Endothelial cell of umbilical vein (primary cell): ENCODE measurements at regions of chr1 and their contacts with region 1.

Region 1: DNA sequence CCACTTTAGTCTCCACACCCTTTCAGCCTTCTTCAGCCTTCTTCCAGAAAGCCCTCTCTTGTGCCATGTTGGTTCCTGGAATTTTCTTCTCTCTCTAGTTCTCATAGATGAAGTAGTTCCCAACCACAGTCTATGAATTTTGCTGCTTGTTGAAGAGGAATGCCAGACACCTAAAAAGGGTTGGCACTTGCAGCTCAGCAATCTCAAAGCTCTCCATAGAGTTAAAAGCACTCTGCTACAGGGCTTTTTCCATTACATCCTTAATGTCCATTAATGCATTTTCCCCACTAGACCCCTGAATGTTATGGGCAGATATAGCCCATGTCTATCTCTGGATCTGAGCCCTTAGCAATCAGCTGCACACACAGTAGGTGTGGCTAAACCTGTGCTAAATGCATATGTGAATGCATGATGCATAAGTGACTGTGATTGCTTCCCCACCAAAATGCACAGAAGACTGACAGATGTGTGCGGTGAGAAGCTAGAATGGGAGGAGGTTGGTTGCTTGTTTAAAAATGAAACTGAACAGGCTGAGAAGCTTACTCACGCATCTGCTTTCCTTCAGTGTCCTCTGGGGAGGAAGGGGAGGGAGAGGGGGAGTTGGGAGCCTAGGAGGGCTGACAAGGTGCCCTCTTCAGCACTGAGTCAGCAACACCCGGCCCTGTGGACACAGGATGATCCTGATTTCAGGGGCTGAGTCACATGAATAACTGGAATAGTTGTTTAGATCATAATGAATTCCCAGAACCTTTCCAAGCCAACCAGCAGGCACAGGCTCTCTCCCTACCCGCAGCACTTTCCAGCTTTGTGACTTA is 146.1 kb upstream of the FGGY start:
- DNase-seq: peak; percentile 89
- H3K4me3 ChIP-seq: no peak overlapping the region
- H3K27ac ChIP-seq: peak overlapping the region; percentile 60
- H3K4me1 ChIP-seq: peaks cover 33% of the 10 kb centered on the region
- H3K27me3 ChIP-seq: no peaks in the 10 kb centered on the region
- CTCF ChIP-seq: no peak
- POLR2A ChIP-seq: no peak

Region 2: GRCh38 chr1:59229138-59229537 is 78.4 kb after region 1 on chr1:
- CTCF ChIA-PET with region 1: no interaction called
- POLR2A ChIA-PET with region 1: no interaction called
- dilution Hi-C with region 1: no loop called
- intact Hi-C with region 1: no loop called
- DNase-seq: no peak
- H3K4me3 ChIP-seq: no peak overlapping the region
- H3K27ac ChIP-seq: no peak overlapping the region
- H3K4me1 ChIP-seq: no peaks in the 10 kb centered on the region
- H3K27me3 ChIP-seq: no peaks in the 10 kb centered on the region
- CTCF ChIP-seq: no peak
- POLR2A ChIP-seq: no peak

Region 3: DNA sequence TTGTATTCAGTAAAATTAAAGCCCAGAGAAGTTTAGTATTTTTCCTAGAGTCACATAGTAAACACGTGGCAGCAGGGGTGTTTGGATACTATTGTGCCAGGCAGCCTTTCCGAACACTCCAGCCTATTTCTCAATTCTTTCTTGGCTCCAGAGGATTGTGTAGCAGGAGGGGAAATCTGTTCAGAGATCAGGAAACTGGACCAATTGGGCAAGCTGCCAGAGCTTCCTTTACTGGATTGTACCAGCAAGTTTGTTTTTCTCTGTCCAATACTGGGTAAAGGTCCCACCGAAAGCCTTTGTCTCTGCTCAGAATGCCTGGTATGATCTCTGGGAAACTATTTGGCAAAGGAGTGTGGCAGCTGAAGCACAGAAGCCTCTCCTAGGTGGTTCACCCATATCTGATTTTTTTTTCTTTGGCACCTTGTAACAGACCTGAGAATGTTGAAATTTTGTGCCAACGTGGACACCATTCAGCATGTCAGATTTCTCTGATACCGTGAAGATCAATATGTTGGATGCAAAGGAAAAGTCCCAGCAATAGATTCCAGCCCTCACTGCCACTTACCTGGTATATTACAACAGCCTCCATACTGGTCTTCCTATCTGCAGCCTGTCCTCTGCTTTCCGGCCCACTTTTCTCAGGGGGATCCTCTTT is 272.3 kb after region 1 on chr1:
- CTCF ChIA-PET with region 1: no interaction called
- POLR2A ChIA-PET with region 1: no interaction called
- dilution Hi-C with region 1: no loop called
- intact Hi-C with region 1: loop called (anchors 10 kb)
- DNase-seq: peak; percentile 97
- H3K4me3 ChIP-seq: no peak overlapping the region
- H3K27ac ChIP-seq: peak overlapping the region; percentile 13
- H3K4me1 ChIP-seq: peaks cover 10% of the 10 kb centered on the region
- H3K27me3 ChIP-seq: no peaks in the 10 kb centered on the region
- CTCF ChIP-seq: no peak
- POLR2A ChIP-seq: no peak

Region 4: GRCh38 chr1:59484096-59484495 is 333.3 kb after region 1 on chr1:
- CTCF ChIA-PET with region 1: no interaction called
- POLR2A ChIA-PET with region 1: no interaction called
- dilution Hi-C with region 1: no loop called
- intact Hi-C with region 1: loop called (anchors 10 kb)
- DNase-seq: peak; percentile 79
- H3K4me3 ChIP-seq: no peak overlapping the region
- H3K27ac ChIP-seq: peak overlapping the region; percentile 19
- H3K4me1 ChIP-seq: peaks cover 19% of the 10 kb centered on the region
- H3K27me3 ChIP-seq: no peaks in the 10 kb centered on the region
- CTCF ChIP-seq: no peak
- POLR2A ChIP-seq: no peak